Heart right ventricle (tissue), 16 donors: ENCODE measurements at regions of chr15 and their contacts with region 1.

Region 1: GRCh38 chr15:99169769-99170311 is 65.0 kb downstream of the SYNM start:
- DNase-seq: no peak
- ATAC-seq: peak in 7 of 8 donors; percentile 14 to 69 (median 48)
- H3K4me3 ChIP-seq: no peak overlapping the region
- H3K27ac ChIP-seq: peak overlapping the region; percentile 41 to 85 (median 80)
- H3K4me1 ChIP-seq: peaks cover 5 to 64% (median 31%) of the 10 kb centered on the region in 9 donors
- H3K27me3 ChIP-seq: no peaks in the 10 kb centered on the region
- CTCF ChIP-seq: no peak

Region 2: GRCh38 chr15:99110581-99111320 is 59.1 kb before region 1 on chr15:
- intact Hi-C with region 1: loop called in 2 of 10 experiments (anchors 5 kb)
- DNase-seq: no peak
- ATAC-seq: no peak
- H3K4me3 ChIP-seq: peak overlapping the region in 2 of 10 donors; percentile 5 to 9
- H3K27ac ChIP-seq: peak overlapping the region in 8 of 10 donors; percentile 44 to 95 (median 79)
- H3K4me1 ChIP-seq: peaks cover 0 to 92% (median 54%) of the 10 kb centered on the region in 9 donors
- H3K27me3 ChIP-seq: peaks cover 0 to 19% (median 0%) of the 10 kb centered on the region in 7 donors
- CTCF ChIP-seq: no peak

Region 3: DNA sequence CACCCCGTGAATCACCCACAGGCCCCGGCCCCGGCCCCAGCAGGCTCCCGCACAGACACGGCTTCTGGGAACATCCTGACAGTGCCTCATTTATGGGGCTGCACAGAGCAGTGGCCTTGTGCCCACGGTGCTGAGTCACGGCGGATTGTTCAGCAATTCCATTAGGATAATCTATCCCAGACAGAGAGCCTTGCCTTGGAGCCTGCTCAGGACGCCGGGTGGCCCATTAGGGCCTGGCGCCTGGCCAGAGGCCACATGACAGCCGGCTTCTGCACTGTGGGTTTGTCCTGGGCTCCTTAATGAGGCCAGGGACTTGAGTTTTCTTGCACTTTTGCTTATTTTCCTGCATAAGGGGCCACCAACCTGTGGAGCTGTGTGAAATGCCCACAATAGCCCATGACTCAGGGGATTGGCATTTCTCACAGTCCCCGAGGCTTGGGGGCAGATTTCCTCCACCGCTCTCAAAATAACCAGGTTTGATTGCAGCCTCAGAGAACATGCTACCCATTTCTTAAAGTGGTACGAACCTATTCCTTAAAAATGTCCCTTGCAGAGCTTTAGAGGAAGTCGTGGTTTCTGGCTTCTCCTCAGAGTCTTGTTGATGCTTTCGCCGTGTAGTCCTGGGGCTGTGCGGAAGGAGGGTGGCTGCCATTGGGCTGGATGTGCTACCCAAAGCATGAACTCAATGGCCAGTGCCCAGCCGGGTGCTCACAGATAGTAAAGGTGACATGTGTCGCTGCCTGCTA is 46.0 kb before region 1 on chr15:
- intact Hi-C with region 1: loop called in 2 of 10 experiments (anchors 5 to 10 kb)
- DNase-seq: peak; percentile 82 to 86
- ATAC-seq: peak; percentile 81 to 92 (median 90)
- H3K4me3 ChIP-seq: peak overlapping the region in 9 of 10 donors; percentile 1 to 44 (median 28)
- H3K27ac ChIP-seq: peak overlapping the region; percentile 67 to 97 (median 90)
- H3K4me1 ChIP-seq: peaks cover 33 to 79% (median 51%) of the 10 kb centered on the region in 9 donors
- H3K27me3 ChIP-seq: no peaks in the 10 kb centered on the region
- CTCF ChIP-seq: no peak

Region 4: GRCh38 chr15:99143655-99144610 is 25.9 kb before region 1 on chr15:
- intact Hi-C with region 1: loop called in 1 of 10 experiments (anchors 1 kb)
- DNase-seq: peak in 1 of 2 donors; percentile 63
- ATAC-seq: peak in 7 of 8 donors; percentile 50 to 90 (median 59)
- H3K4me3 ChIP-seq: no peak overlapping the region
- H3K27ac ChIP-seq: peak overlapping the region in 4 of 10 donors; percentile 12 to 54 (median 16)
- H3K4me1 ChIP-seq: peaks cover 0 to 34% (median 18%) of the 10 kb centered on the region in 9 donors
- H3K27me3 ChIP-seq: no peaks in the 10 kb centered on the region
- CTCF ChIP-seq: no peak

Region 5: GRCh38 chr15:99213187-99213811 is 43.5 kb after region 1 on chr15:
- intact Hi-C with region 1: loop called in 4 of 10 experiments (anchors 2 to 5 kb)
- DNase-seq: peak; percentile 77 to 84
- ATAC-seq: peak; percentile 74 to 91 (median 86)
- H3K4me3 ChIP-seq: no peak overlapping the region
- H3K27ac ChIP-seq: peak overlapping the region in 7 of 10 donors; percentile 7 to 80 (median 42)
- H3K4me1 ChIP-seq: peaks cover 0 to 23% (median 9%) of the 10 kb centered on the region in 9 donors
- H3K27me3 ChIP-seq: no peaks in the 10 kb centered on the region
- CTCF ChIP-seq: peak; percentile 80 to 96 (median 94)